GM13976 (cell line): ENCODE measurements at regions of chr3 and their contacts with region 1.

Region 1: GRCh38 chr3:158790901-158791589 is 10.8 kb upstream of the MFSD1 start:
- DNase-seq: peak; percentile 37
- CTCF ChIP-seq: peak; percentile 66

Region 2: GRCh38 chr3:158727206-158728060 is 63.6 kb before region 1 on chr3:
- in situ Hi-C with region 1: loop called (anchors 10 kb)
- DNase-seq: peak; percentile 79
- CTCF ChIP-seq: peak; percentile 88

Region 3: GRCh38 chr3:159532577-159532976 is 741.5 kb after region 1 on chr3:
- in situ Hi-C with region 1: no loop called
- DNase-seq: no peak
- CTCF ChIP-seq: no peak